MCF 10A (cell line): ENCODE measurements at regions of chr2 and their contacts with region 1.

Region 1: DNA sequence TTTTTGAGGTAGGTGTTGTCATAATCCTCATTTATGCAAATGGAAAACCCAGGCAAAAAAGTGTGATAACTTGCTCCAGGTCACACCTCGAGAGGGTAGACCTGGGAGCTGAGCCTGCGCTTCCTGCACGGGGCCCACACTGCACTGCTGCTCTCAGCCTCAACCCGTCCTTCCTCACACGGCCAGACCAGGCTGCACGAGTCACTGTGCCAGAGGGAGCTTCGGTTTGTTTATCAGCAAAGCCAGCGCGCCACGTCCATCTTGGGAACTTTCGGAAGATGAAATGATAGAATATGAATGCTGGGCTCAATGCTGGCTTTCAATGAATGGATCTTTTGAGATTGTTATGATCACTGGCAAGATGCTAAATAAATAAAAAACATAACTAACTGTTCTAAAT is 14.4 kb downstream of the COPS9 start:
- DNase-seq: no peak
- H3K4me3 Mint-ChIP-seq: no peak overlapping the region
- H3K27ac Mint-ChIP-seq: no peak overlapping the region
- H3K4me1 Mint-ChIP-seq: no peaks in the 10 kb centered on the region
- H3K27me3 Mint-ChIP-seq: peaks cover 52% of the 10 kb centered on the region
- CTCF ChIP-seq: no peak

Region 2: GRCh38 chr2:240060977-240061591 is 60.6 kb before region 1 on chr2:
- CTCF ChIA-PET with region 1: interaction called, 11 read pairs
- POLR2A ChIA-PET with region 1: no interaction called
- intact Hi-C with region 1: no loop called
- DNase-seq: peak; percentile 68
- H3K4me3 Mint-ChIP-seq: no peak overlapping the region
- H3K27ac Mint-ChIP-seq: no peak overlapping the region
- H3K4me1 Mint-ChIP-seq: no peaks in the 10 kb centered on the region
- H3K27me3 Mint-ChIP-seq: peaks cover 100% of the 10 kb centered on the region
- CTCF ChIP-seq: peak; percentile 66

Region 3: DNA sequence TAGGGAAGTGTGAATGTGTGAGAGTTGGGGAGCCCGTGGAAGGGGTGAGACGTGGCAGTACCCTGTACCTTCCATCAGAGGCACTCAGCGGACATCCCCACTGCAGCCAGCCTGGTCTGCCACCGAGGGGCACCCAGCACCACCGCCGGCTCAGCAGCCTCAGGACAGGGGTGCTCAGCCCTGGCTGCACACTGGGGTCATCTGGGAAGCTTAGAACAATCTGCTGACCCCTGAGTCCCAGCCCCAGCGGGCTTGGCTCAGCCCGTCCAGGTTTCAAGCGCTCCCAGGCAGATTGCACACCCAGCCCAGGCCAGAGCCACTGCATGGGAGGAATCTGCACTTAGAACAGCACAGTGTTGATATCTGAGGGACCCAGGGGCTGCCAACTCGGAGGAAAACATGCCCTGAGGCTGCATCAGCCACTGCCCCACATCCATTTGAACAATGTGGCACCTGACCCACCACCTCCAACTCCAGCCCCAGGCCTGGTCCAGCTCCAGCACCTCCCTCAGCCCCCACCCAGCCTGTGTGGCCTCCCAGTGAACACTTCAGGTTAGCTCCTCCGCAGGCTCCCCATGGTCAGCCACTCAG is 165.9 kb after region 1 on chr2:
- CTCF ChIA-PET with region 1: no interaction called
- POLR2A ChIA-PET with region 1: no interaction called
- intact Hi-C with region 1: no loop called
- DNase-seq: no peak
- H3K4me3 Mint-ChIP-seq: no peak overlapping the region
- H3K27ac Mint-ChIP-seq: no peak overlapping the region
- H3K4me1 Mint-ChIP-seq: no peaks in the 10 kb centered on the region
- H3K27me3 Mint-ChIP-seq: peaks cover 9% of the 10 kb centered on the region
- CTCF ChIP-seq: no peak